ENCODE measurements at regions of chr17 and their contacts with region 1.

Region 1: GRCh38 chr17:56699186-56699895 is 105.8 kb downstream of the NOG start:
- DNase-seq: peak; percentile 94
- H3K4me3 ChIP-seq: no peak overlapping the region
- H3K27ac ChIP-seq: peak overlapping the region; percentile 66 to 83 (median 78)
- H3K4me1 ChIP-seq: peaks cover 17 to 29% (median 21%) of the 10 kb centered on the region in 4 donors
- H3K27me3 ChIP-seq: no peaks in the 10 kb centered on the region
- CTCF ChIP-seq: no peak
- EP300 ChIP-seq: peak; percentile 57
- POLR2A ChIP-seq: no peak

Region 2: GRCh38 chr17:56159826-56160632 is 539.3 kb before region 1 on chr17:
- intact Hi-C with region 1: loop called (anchors 10 kb)
- DNase-seq: no peak
- H3K4me3 ChIP-seq: no peak overlapping the region
- H3K27ac ChIP-seq: no peak overlapping the region
- H3K4me1 ChIP-seq: peaks cover 0 to 22% (median 13%) of the 10 kb centered on the region in 4 donors
- H3K27me3 ChIP-seq: no peaks in the 10 kb centered on the region
- CTCF ChIP-seq: no peak
- EP300 ChIP-seq: no peak
- POLR2A ChIP-seq: no peak

Measured in esophagus muscularis mucosa (tissue), 4 donors.